Mucosa of descending colon (tissue), 3 donors: ENCODE measurements at regions of chr6 and their contacts with region 1.

Region 1: DNA sequence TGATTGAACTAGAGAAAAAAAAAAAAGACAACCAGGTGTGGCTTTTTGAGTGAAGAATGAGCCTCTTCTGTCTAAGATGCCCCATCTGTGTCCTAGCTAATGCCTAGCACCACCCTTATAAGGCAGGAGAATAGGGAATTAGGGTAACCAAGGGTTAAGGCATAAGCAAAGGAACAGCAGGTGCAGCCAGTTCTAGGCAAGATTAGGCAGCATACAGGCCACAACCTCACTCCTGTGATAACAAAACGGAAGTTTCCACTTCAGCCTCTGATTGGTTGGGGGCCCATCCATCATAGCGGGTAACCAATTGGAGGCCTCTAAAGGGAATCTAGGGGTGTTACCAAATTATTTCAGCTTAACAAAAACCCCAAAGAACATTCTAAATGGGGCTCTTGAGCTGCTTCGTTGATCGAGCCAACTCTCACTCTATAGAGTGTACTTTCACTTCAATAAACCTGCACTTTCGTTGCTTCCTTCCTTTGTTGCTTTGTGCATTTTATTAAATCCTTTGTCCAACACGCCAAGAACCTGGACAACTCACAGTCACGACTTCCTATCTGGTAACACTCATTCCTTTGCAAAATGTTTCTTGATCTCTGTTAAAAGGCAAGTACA is 61.9 kb upstream of the TAGAP start:
- DNase-seq: peak in 2 of 3 donors; percentile 80 to 83
- ATAC-seq: peak; percentile 78
- H3K4me3 ChIP-seq: no peak overlapping the region
- H3K4me1 ChIP-seq: peaks cover 6% of the 10 kb centered on the region
- CTCF ChIP-seq: no peak

Region 2: GRCh38 chr6:158506577-158506976 is 600.2 kb before region 1 on chr6:
- intact Hi-C with region 1: no loop called
- DNase-seq: peak in 1 of 3 donors; percentile 12
- ATAC-seq: peak; percentile 53
- H3K4me3 ChIP-seq: no peak overlapping the region
- H3K4me1 ChIP-seq: no peaks in the 10 kb centered on the region
- CTCF ChIP-seq: no peak

Region 3: GRCh38 chr6:159042003-159042825 is 64.5 kb before region 1 on chr6:
- intact Hi-C with region 1: loop called in 1 of 2 experiments (anchors 2 kb)
- DNase-seq: peak; percentile 64 to 82 (median 80)
- ATAC-seq: peak; percentile 91
- H3K4me3 ChIP-seq: no peak overlapping the region
- H3K4me1 ChIP-seq: no peaks in the 10 kb centered on the region
- CTCF ChIP-seq: peak; percentile 95

Region 4: GRCh38 chr6:159152041-159152440 is 45.3 kb after region 1 on chr6:
- intact Hi-C with region 1: no loop called
- DNase-seq: no peak
- ATAC-seq: no peak
- H3K4me3 ChIP-seq: no peak overlapping the region
- H3K4me1 ChIP-seq: no peaks in the 10 kb centered on the region
- CTCF ChIP-seq: no peak

Region 5: GRCh38 chr6:159450815-159451465 is 344.2 kb after region 1 on chr6:
- intact Hi-C with region 1: no loop called
- DNase-seq: no peak
- ATAC-seq: no peak
- H3K4me3 ChIP-seq: no peak overlapping the region
- H3K4me1 ChIP-seq: no peaks in the 10 kb centered on the region
- CTCF ChIP-seq: no peak